ENCODE measurements at regions of chr2 and their contacts with region 1.

Region 1: DNA sequence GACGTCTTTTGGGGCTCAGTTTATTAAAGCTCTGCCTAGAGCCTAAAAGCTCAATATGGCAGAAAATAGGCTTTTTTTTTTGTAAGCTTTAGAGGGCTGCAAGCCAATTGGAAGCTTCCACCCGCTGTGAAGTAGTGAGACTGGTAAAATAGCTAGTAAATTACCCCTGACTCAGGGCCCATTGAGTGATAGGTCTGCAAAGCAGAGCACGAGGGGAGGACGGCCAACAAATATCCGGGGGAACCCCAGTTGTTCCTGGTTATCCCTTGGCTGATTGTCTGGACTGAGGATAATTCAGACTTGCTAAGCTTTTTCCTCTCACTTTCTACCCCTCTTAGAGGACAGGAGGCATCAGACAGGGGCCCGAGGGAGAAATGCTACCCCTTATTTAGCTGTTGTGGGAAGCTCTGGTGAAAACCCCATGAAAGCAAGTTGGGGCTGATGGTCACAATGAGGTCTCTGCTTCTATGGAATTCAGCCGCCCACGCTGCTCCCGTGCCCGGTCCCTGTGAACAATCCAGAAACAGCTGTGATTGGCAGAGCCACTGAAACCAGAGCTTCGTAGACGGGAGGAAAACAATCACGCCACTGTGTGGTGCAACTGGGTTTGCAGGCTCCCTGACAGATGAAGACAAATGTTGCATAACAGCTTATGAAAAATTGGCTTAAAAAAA is 141.9 kb upstream of the LGALSL start:
- DNase-seq: peak; percentile 70 to 78
- H3K4me3 ChIP-seq: no peak overlapping the region
- H3K27ac ChIP-seq: peak overlapping the region in 2 of 3 donors; percentile 17 to 40
- H3K4me1 ChIP-seq: peaks cover 4 to 8% of the 10 kb centered on the region in 2 donors
- H3K27me3 ChIP-seq: no peaks in the 10 kb centered on the region
- CTCF ChIP-seq: peak in 4 of 6 experiments; percentile 36 to 55 (median 54)
- POLR2A ChIP-seq: no peak

Region 2: GRCh38 chr2:64052468-64053241 is 259.4 kb before region 1 on chr2:
- intact Hi-C with region 1: loop called (anchors 5 kb)
- DNase-seq: no peak
- H3K4me3 ChIP-seq: no peak overlapping the region
- H3K27ac ChIP-seq: peak overlapping the region in 1 of 3 donors; percentile 43
- H3K4me1 ChIP-seq: no peaks in the 10 kb centered on the region
- H3K27me3 ChIP-seq: no peaks in the 10 kb centered on the region
- CTCF ChIP-seq: no peak
- POLR2A ChIP-seq: no peak

Region 3: GRCh38 chr2:64488050-64488974 is 176.2 kb after region 1 on chr2:
- intact Hi-C with region 1: no loop called
- DNase-seq: peak; percentile 51 to 61
- H3K4me3 ChIP-seq: no peak overlapping the region
- H3K27ac ChIP-seq: no peak overlapping the region
- H3K4me1 ChIP-seq: peaks cover 0 to 7% of the 10 kb centered on the region in 2 donors
- H3K27me3 ChIP-seq: no peaks in the 10 kb centered on the region
- CTCF ChIP-seq: peak; percentile 73 to 97 (median 90)
- POLR2A ChIP-seq: no peak

Region 4: DNA sequence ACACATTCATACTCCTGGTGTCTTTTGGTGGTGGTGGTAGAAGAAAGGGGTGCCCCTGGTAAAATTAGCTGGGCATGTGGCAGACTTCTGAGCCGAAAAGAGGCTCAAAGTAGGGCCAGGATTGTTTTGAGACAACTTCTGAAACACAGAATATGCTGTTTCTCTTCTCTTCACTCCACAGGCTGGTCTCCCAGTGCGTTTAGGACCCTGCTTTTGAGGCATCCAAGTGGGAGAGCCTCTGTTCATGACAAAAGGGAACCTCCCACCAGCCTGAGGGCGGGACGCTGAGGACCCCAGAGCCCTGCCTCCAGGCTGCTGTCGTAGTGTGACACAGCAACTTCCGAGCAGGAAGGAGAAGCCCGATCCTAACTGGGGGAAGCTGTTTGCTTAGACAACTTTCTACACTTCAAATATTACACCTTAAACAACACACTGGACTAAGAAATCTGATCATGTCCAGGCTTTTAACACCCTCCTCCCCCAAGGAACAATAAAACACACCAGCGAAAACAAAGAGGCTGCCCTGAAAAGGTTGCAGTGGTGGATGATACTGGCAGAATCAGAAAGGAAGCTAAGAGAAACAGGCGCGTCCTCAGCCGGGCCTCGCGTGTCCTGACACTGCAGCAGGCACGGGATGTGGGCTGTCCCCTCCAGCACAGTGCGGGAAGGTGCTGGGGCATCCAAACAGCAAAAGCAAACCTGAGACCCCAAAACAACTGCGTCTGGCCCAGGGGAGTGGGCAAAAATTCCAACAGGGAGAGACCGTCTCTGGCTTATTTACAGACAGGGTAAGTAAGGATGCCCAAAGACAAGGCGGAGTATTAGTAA is 332.3 kb after region 1 on chr2:
- intact Hi-C with region 1: no loop called
- DNase-seq: peak; percentile 88 to 91
- H3K4me3 ChIP-seq: peak overlapping the region in 2 of 3 donors; percentile 7 to 27
- H3K27ac ChIP-seq: peak overlapping the region; percentile 90 to 99 (median 98)
- H3K4me1 ChIP-seq: peaks cover 55 to 85% of the 10 kb centered on the region in 2 donors
- H3K27me3 ChIP-seq: no peaks in the 10 kb centered on the region
- CTCF ChIP-seq: no peak
- POLR2A ChIP-seq: peak in 1 of 2 donors; percentile 94

Measured in thyroid gland (tissue), 4 donors.